ENCODE measurements at regions of chr6 and their contacts with region 1.

Region 1: GRCh38 chr6:13328076-13328874 is at the start of gene TBC1D7:
- DNase-seq: peak; percentile 86 to 96 (median 91)
- ATAC-seq: peak; percentile 84
- H3K4me3 ChIP-seq: peak within 1 kb of the TSS; percentile 86 to 90
- H3K4me3 Mint-ChIP-seq: peak within 1 kb of the TSS; percentile 96
- H3K27ac ChIP-seq: peak within 1 kb of the TSS; percentile 81 to 95
- H3K27ac Mint-ChIP-seq: peak within 1 kb of the TSS; percentile 99
- H3K4me1 ChIP-seq: peaks cover 9% of the 10 kb centered on the region
- H3K4me1 Mint-ChIP-seq: peaks cover 22% of the 10 kb centered on the region
- H3K27me3 ChIP-seq: no peaks in the 10 kb centered on the region
- H3K27me3 Mint-ChIP-seq: no peaks in the 10 kb centered on the region
- CTCF ChIP-seq: no peak
- total RNA-seq, gene TBC1D7: 13.7 to 16.0 TPM

Region 2: GRCh38 chr6:12011276-12012076 is 1316.8 kb before region 1 on chr6:
- CTCF ChIA-PET with region 1: no interaction called
- POLR2A ChIA-PET with region 1: no interaction called
- intact Hi-C with region 1: loop called in 1 of 2 experiments (anchors 10 kb)
- DNase-seq: peak; percentile 92 to 99 (median 96)
- ATAC-seq: peak; percentile 71
- H3K4me3 ChIP-seq: peak overlapping the region in 1 of 2 experiments; percentile 73
- H3K4me3 Mint-ChIP-seq: peak overlapping the region; percentile 91
- H3K27ac ChIP-seq: peak overlapping the region in 1 of 2 experiments; percentile 93
- H3K27ac Mint-ChIP-seq: peak overlapping the region; percentile 94
- H3K4me1 ChIP-seq: peaks cover 28% of the 10 kb centered on the region
- H3K4me1 Mint-ChIP-seq: peaks cover 60% of the 10 kb centered on the region
- H3K27me3 ChIP-seq: no peaks in the 10 kb centered on the region
- H3K27me3 Mint-ChIP-seq: no peaks in the 10 kb centered on the region
- CTCF ChIP-seq: no peak

Region 3: DNA sequence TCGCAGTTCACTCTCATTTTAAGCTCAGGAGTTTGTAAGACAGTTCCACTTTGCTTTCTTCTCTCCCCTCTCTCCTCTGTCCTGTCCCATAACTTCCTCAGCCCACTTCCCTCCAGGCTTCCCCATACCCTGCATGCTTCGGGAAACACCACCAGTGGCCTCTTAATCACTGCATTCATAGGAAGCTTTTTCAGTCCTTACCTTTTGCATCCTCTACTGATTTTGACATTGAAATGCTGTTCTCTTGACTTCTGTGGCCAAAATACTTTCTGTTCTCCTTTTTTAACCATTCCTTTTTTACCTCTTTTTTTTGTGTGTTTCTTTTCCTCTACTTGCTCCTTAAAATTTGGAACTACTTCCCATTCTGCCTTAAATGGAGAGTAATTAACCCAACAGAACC is 1246.5 kb before region 1 on chr6:
- CTCF ChIA-PET with region 1: no interaction called
- POLR2A ChIA-PET with region 1: no interaction called
- intact Hi-C with region 1: no loop called
- DNase-seq: no peak
- ATAC-seq: no peak
- H3K4me3 ChIP-seq: no peak overlapping the region
- H3K4me3 Mint-ChIP-seq: no peak overlapping the region
- H3K27ac ChIP-seq: no peak overlapping the region
- H3K27ac Mint-ChIP-seq: peak overlapping the region; percentile 15
- H3K4me1 ChIP-seq: peaks cover 7% of the 10 kb centered on the region
- H3K4me1 Mint-ChIP-seq: peaks cover 50% of the 10 kb centered on the region
- H3K27me3 ChIP-seq: no peaks in the 10 kb centered on the region
- H3K27me3 Mint-ChIP-seq: no peaks in the 10 kb centered on the region
- CTCF ChIP-seq: no peak

Region 4: DNA sequence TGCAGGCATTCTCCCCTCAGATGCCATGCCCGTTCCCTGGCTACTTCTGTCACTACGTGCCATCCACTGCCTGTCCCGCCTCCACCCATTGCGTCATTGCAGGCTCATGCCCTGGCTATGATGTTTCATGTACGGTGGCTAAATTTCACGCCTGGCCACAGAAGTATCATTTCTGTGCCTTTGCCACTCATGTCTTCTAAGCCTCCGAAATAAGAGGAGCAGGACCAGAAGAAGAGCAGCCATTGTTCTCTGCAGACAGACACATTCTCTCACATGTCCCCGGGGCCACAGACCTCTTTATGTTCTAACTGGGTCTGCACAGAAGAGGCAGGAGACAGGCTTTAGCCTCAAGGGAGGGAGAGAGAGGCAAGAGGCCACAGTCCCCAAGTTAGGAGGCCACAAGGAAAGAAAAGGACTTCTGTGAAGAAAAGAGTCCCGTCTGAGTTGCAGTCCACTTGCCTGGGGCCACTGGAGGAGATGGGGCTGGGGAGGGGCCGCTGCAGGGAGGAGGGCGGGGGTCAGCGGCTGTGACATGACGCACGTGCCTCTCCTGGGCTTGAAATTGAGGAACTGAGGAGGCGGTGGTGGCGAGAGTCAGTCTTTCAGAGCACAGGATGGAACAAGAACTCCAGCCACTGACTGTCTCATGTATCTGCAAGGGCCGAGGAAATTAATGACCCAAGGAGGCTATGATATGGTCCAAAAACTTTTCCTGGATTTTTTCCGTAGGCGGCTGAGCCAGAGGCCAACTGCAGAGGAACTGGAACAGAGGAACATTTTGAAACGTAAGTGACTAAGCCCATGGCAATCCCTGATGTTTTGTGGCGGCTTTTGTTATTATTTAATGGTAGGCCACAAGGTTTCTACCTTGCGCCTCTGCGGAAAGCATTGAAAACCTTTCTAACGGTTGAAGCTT is 55.9 kb before region 1 on chr6:
- CTCF ChIA-PET with region 1: no interaction called
- POLR2A ChIA-PET with region 1: no interaction called
- intact Hi-C with region 1: no loop called
- DNase-seq: peak in 1 of 9 experiments; percentile 43
- ATAC-seq: no peak
- H3K4me3 ChIP-seq: no peak overlapping the region
- H3K4me3 Mint-ChIP-seq: peak overlapping the region; percentile 15
- H3K27ac ChIP-seq: no peak overlapping the region
- H3K27ac Mint-ChIP-seq: peak overlapping the region; percentile 8
- H3K4me1 ChIP-seq: peaks cover 13% of the 10 kb centered on the region
- H3K4me1 Mint-ChIP-seq: peaks cover 23% of the 10 kb centered on the region
- H3K27me3 ChIP-seq: no peaks in the 10 kb centered on the region
- H3K27me3 Mint-ChIP-seq: no peaks in the 10 kb centered on the region
- CTCF ChIP-seq: no peak

Region 5: DNA sequence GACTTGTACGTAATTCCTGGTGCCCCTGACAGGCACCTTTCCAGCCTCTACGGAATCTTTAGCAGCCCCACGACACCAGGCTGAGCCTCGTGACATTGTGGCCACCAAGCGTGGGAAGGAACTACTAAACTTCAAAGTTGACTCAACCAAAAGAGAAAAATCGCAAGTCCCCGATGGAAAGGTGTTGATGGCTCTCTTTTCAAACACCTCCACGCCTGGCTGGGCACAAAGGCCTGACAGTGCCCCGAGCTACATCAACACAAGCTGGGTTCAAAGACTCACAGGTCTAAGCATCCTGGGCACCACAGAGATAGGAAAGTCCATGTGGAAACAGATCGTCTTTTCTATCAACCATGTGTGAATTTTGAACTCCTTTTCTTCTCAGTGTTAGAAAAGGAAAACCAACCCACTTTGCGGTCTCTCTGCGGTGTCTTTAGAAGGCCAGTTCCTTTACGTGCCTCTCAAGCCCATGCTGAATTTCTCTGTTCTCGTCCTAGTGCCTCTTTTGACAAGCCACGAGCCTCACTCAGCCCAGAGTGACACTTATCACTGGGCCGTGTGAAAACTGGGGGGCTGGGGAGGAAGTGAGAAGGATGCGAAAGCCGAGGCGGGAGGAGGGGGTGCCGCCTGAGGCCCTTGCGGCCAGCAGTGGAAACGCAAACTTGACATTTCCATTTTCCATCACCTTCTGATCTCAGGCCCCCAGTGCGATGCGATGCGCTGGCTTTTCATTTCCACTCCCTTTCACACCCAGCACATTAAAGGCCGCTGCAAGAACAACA is 99.7 kb after region 1 on chr6:
- CTCF ChIA-PET with region 1: interaction called, 3 read pairs
- POLR2A ChIA-PET with region 1: interaction called, 3 read pairs
- intact Hi-C with region 1: loop called in 1 of 2 experiments (anchors 5 kb)
- DNase-seq: peak; percentile 25 to 92 (median 68)
- ATAC-seq: peak; percentile 80
- H3K4me3 ChIP-seq: peak overlapping the region; percentile 1 to 19
- H3K4me3 Mint-ChIP-seq: peak overlapping the region; percentile 70
- H3K27ac ChIP-seq: peak overlapping the region; percentile 8 to 89
- H3K27ac Mint-ChIP-seq: peak overlapping the region; percentile 89
- H3K4me1 ChIP-seq: peaks cover 26% of the 10 kb centered on the region
- H3K4me1 Mint-ChIP-seq: peaks cover 61% of the 10 kb centered on the region
- H3K27me3 ChIP-seq: no peaks in the 10 kb centered on the region
- H3K27me3 Mint-ChIP-seq: no peaks in the 10 kb centered on the region
- CTCF ChIP-seq: peak; percentile 25

Region 6: GRCh38 chr6:13624871-13625288 is 296.6 kb after region 1 on chr6:
- CTCF ChIA-PET with region 1: no interaction called
- POLR2A ChIA-PET with region 1: no interaction called
- intact Hi-C with region 1: loop called in 1 of 2 experiments (anchors 5 kb)
- DNase-seq: peak in 3 of 9 experiments; percentile 26 to 70 (median 58)
- ATAC-seq: peak; percentile 90
- H3K4me3 ChIP-seq: no peak overlapping the region
- H3K4me3 Mint-ChIP-seq: no peak overlapping the region
- H3K27ac ChIP-seq: no peak overlapping the region
- H3K27ac Mint-ChIP-seq: peak overlapping the region; percentile 72
- H3K4me1 ChIP-seq: no peaks in the 10 kb centered on the region
- H3K4me1 Mint-ChIP-seq: peaks cover 16% of the 10 kb centered on the region
- H3K27me3 ChIP-seq: no peaks in the 10 kb centered on the region
- H3K27me3 Mint-ChIP-seq: no peaks in the 10 kb centered on the region
- CTCF ChIP-seq: no peak

Region 7: GRCh38 chr6:14066782-14067406 is 738.6 kb after region 1 on chr6:
- CTCF ChIA-PET with region 1: interaction called, 8 read pairs
- POLR2A ChIA-PET with region 1: no interaction called
- intact Hi-C with region 1: loop called in 1 of 2 experiments (anchors 5 kb)
- DNase-seq: peak in 3 of 9 experiments; percentile 8 to 74 (median 64)
- ATAC-seq: peak; percentile 78
- H3K4me3 ChIP-seq: no peak overlapping the region
- H3K4me3 Mint-ChIP-seq: no peak overlapping the region
- H3K27ac ChIP-seq: no peak overlapping the region
- H3K27ac Mint-ChIP-seq: no peak overlapping the region
- H3K4me1 ChIP-seq: no peaks in the 10 kb centered on the region
- H3K4me1 Mint-ChIP-seq: no peaks in the 10 kb centered on the region
- H3K27me3 ChIP-seq: peaks cover 0 to 3% of the 10 kb centered on the region in 2 experiments
- H3K27me3 Mint-ChIP-seq: peaks cover 10% of the 10 kb centered on the region
- CTCF ChIP-seq: peak; percentile 60

Measured in CD8-positive, alpha-beta T cell (primary cell).